Activated CD8-positive, alpha-beta memory T cell treated with anti-CD3 and anti-CD28 coated beads, Interleukin-2, amount 10 ng/mL, durations not matched to agents 7 days and 5 days (primary cell): ENCODE measurements at regions of chr20 and their contacts with region 1.

Region 1: GRCh38 chr20:45963059-45964005 is 8.7 kb downstream of the ZNF335 start:
- DNase-seq: no peak
- ATAC-seq: no peak
- H3K4me3 Mint-ChIP-seq: no peak overlapping the region
- H3K27ac Mint-ChIP-seq: no peak overlapping the region
- H3K4me1 Mint-ChIP-seq: peaks cover 7% of the 10 kb centered on the region
- H3K27me3 Mint-ChIP-seq: no peaks in the 10 kb centered on the region

Region 2: DNA sequence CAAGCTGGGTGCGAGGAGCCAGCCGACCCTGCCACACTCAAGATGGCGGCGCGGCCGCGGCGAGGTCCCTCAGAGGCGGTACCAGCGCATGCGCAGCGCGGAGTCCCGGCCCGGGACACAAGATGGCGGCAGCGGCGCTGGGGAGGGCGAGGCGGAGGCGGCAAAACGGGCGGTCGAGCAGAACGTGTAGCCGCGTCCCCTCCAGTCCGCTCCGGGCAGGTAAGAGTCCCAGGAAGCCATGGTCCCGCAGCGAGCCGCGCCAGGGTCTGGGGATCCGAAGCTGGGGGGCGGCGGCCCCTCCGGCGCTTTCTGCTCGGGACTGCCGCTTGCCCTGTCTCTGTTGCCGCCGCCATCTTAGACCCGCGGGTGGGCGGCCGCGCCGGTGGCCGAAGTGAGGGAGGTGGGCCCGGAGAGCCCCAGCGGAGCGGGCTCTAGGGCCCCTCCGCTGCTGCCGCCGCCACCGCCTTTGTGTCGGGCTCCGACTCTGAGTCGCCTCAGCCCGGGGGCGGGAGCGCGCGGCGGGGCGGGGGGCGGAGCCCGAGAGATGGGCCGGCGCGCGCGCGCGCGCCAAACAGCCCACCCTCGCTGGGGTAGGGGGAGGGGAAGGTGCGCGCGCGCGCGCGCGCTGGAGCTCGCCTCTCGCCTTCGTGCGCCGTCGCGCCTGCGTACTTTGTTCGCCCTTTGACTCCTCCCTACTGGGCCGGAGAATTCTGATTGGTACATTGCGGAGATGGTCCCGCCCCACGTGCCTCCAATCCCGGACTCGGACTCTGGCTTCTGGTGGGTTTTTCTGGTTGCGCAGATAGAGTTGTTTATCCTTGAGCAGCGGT is 28.5 kb before region 1 on chr20 and contains the start of gene PCIF1:
- CTCF ChIA-PET with region 1: interaction called, 114 read pairs
- DNase-seq: peak; percentile 98
- ATAC-seq: peak; percentile 86
- H3K4me3 Mint-ChIP-seq: peak within 1 kb of the TSS; percentile 96
- H3K27ac Mint-ChIP-seq: peak within 1 kb of the TSS; percentile 98
- H3K4me1 Mint-ChIP-seq: peaks cover 35% of the 10 kb centered on the region
- H3K27me3 Mint-ChIP-seq: no peaks in the 10 kb centered on the region
- total RNA-seq, gene PCIF1: 41.6 to 52.3 TPM

Region 3: GRCh38 chr20:45946149-45946970 is 17.0 kb before region 1 on chr20:
- CTCF ChIA-PET with region 1: interaction called, 114 read pairs
- DNase-seq: peak; percentile 85
- ATAC-seq: peak; percentile 69
- H3K4me3 Mint-ChIP-seq: no peak overlapping the region
- H3K27ac Mint-ChIP-seq: peak overlapping the region; percentile 83
- H3K4me1 Mint-ChIP-seq: peaks cover 38% of the 10 kb centered on the region
- H3K27me3 Mint-ChIP-seq: no peaks in the 10 kb centered on the region

Region 4: DNA sequence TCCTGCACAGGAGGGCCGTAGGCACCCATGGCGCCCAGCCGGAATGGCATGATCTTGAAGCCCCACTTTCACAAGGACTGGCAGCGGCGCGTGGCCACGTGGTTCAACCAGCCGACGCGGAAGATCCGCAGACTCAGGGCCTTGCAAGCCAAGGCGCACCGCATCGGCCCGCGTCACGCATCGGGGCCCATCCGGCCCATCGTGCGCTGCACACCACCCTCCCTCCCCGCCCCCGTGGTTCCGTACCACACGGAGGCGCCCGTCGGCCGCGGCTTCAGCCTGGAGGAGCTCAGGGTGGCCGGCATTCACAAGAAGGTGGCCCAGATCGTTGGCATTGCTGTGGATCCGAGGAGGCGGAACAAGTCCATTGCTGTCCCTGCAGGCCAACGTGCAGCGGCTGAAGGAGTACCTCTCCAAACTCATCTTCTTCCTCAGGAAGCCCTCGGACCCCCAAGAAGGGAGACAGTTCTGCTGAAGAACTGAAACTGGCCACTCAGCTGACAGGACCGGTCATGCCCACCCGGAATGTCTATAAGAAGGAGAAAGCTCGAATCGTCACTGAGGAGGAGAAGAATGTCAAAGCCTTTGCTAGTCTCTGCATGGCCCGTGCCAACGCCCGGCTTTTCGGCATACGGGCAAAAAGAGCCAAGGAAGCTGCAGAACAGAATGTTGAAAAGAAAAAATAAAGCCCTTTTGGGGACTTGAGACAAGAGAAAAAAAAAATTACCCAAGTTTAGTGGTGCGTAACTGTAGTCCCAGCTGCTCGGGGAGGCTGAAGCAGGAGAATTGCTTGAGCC is 136.4 kb after region 1 on chr20:
- CTCF ChIA-PET with region 1: no interaction called
- DNase-seq: no peak
- ATAC-seq: no peak
- H3K4me3 Mint-ChIP-seq: no peak overlapping the region
- H3K27ac Mint-ChIP-seq: no peak overlapping the region
- H3K4me1 Mint-ChIP-seq: no peaks in the 10 kb centered on the region
- H3K27me3 Mint-ChIP-seq: peaks cover 62% of the 10 kb centered on the region

Region 5: DNA sequence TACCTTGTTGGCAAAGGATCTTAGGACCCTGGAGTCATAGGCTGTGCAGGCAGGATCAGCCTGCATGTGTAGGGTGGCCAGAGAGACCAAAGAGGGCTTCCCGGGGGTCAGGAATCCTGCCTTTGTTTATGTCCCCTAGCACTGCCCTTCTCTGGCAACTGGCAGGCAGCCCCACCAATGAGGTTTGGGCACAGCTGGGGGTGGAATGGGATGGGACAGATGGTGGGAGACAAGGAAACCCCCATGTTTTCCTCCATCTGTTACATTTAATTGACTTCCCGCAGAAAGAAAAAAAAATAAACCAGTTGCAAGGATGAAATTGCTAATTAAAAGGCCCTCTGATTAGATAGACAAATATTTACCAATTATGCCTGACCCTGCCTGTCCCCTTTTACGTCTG is 182.4 kb after region 1 on chr20:
- CTCF ChIA-PET with region 1: no interaction called
- DNase-seq: no peak
- ATAC-seq: no peak
- H3K4me3 Mint-ChIP-seq: no peak overlapping the region
- H3K27ac Mint-ChIP-seq: no peak overlapping the region
- H3K4me1 Mint-ChIP-seq: no peaks in the 10 kb centered on the region
- H3K27me3 Mint-ChIP-seq: peaks cover 38% of the 10 kb centered on the region

Region 6: GRCh38 chr20:46304361-46304760 is 341.0 kb after region 1 on chr20:
- CTCF ChIA-PET with region 1: no interaction called
- DNase-seq: no peak
- ATAC-seq: no peak
- H3K4me3 Mint-ChIP-seq: no peak overlapping the region
- H3K27ac Mint-ChIP-seq: no peak overlapping the region
- H3K4me1 Mint-ChIP-seq: peaks cover 4% of the 10 kb centered on the region
- H3K27me3 Mint-ChIP-seq: peaks cover 39% of the 10 kb centered on the region